CD4-positive, alpha-beta T cell (primary cell): ENCODE measurements at regions of chr1 and their contacts with region 1.

Region 1: DNA sequence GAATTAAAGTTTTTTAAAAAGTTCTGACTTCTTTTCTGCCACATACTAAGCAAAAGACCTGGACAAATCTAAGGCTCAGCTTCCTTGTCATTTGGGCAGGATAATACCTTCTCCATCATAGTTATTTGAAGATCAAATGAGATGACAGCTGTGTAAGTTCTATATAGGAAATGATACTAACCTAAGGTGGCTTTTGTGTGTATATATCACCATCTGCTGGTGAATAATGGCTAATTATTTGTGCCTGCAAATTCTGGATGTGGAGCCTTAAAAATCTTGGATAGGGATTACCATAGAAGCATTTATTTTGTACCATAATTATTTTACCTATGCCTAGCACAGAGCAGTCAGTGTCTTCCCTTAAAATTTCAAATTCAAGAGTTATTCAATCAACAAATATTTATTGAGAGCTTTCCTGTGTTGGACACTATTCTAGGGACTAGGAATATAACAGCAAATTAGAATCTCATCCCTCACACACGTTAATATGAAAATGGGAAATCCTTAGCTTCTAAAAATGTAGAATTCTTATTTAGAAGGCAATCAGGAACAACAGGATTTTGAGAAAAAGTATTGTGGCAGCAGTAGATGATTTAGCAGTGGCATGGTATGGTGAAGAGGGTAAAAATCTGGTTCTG is 89.8 kb downstream of the TMEM200B start:
- DNase-seq: peak in 3 of 14 experiments; percentile 56 to 62 (median 60)
- ATAC-seq: peak; percentile 57
- H3K4me3 ChIP-seq: no peak overlapping the region
- H3K4me3 Mint-ChIP-seq: no peak overlapping the region
- H3K27ac ChIP-seq: no peak overlapping the region
- H3K27ac Mint-ChIP-seq: no peak overlapping the region
- H3K4me1 ChIP-seq: no peaks in the 10 kb centered on the region
- H3K4me1 Mint-ChIP-seq: peaks cover 8% of the 10 kb centered on the region
- H3K27me3 ChIP-seq: no peaks in the 10 kb centered on the region
- H3K27me3 Mint-ChIP-seq: no peaks in the 10 kb centered on the region
- CTCF ChIP-seq: peak; percentile 78

Region 2: DNA sequence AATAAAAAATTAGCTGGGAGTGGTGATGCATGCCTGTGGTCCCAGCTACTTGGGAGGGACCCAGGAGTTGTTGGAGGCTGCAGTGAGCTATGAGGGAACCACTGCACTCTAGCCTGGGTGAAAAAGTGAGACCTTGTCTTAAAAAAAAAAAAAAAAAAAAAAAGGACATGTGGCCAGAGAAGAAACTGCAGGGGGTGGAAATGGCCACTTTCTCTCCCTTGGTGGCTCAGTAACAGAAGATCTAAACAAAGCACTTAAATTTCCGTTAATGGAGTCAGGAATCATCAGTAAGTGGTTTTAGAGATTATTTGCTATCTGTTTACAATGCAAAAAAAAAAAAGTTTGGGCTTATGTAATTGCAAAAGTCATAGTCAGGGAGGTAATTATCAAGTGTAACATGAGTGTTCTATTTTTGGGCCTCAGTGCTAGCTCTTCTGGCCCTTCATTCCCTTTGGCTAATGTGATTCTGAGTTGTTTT is 241.3 kb before region 1 on chr1:
- CTCF ChIA-PET with region 1: no interaction called
- POLR2A ChIA-PET with region 1: no interaction called
- intact Hi-C with region 1: loop called (anchors 5 kb)
- DNase-seq: no peak
- ATAC-seq: no peak
- H3K4me3 ChIP-seq: no peak overlapping the region
- H3K4me3 Mint-ChIP-seq: no peak overlapping the region
- H3K27ac ChIP-seq: no peak overlapping the region
- H3K27ac Mint-ChIP-seq: no peak overlapping the region
- H3K4me1 ChIP-seq: no peaks in the 10 kb centered on the region
- H3K4me1 Mint-ChIP-seq: peaks cover 7% of the 10 kb centered on the region
- H3K27me3 ChIP-seq: no peaks in the 10 kb centered on the region
- H3K27me3 Mint-ChIP-seq: peaks cover 11% of the 10 kb centered on the region
- CTCF ChIP-seq: no peak

Region 3: DNA sequence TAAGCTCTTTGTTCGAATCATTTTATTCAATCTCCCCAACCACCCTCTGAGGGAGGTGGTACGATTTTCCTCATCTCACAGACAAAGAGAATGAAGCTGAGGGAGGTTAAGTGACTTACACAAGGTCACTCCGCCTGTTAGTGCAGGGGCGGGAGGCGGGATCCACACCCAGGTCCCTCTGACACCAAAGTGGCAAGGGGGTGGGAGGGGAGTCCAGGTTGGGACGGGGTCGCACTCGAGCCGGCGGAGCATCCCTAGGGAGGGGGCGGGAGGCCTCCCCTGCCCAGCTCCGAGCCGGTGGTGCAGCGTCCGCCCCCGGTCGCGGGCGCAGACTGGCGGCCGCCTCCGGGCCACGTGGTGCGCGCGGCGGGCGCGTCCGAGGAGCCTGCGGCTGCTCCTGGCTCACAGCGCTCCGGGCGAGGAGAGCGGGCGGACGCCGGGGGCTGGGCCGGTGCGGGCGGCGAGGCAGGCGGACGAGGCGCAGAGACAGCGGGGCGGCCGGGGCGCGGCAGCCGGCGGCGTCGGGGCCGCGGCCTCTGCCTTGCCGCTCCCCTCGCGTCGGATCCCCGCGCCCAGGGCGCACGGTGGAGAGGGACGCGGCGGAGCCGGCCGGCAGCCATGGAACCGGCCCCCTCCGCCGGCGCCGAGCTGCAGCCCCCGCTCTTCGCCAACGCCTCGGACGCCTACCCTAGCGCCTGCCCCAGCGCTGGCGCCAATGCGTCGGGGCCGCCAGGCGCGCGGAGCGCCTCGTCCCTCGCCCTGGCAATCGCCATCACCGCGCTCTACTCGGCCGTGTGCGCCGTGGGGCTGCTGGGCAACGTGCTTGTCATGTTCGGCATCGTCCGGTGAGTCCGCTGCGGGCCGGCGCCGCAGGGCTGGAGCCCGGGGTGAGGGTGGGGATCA is 221.9 kb before region 1 on chr1 and contains the start of gene OPRD1:
- CTCF ChIA-PET with region 1: no interaction called
- POLR2A ChIA-PET with region 1: no interaction called
- intact Hi-C with region 1: no loop called
- DNase-seq: no peak
- ATAC-seq: no peak
- H3K4me3 ChIP-seq: no peak within 1 kb of the TSS
- H3K4me3 Mint-ChIP-seq: no peak within 1 kb of the TSS
- H3K27ac ChIP-seq: no peak within 1 kb of the TSS
- H3K27ac Mint-ChIP-seq: no peak within 1 kb of the TSS
- H3K4me1 ChIP-seq: peaks cover 3% of the 10 kb centered on the region
- H3K4me1 Mint-ChIP-seq: no peaks in the 10 kb centered on the region
- H3K27me3 ChIP-seq: peaks cover 27 to 58% of the 10 kb centered on the region in 2 experiments
- H3K27me3 Mint-ChIP-seq: peaks cover 59% of the 10 kb centered on the region
- CTCF ChIP-seq: no peak
- total RNA-seq, gene OPRD1: not detected

Region 4: DNA sequence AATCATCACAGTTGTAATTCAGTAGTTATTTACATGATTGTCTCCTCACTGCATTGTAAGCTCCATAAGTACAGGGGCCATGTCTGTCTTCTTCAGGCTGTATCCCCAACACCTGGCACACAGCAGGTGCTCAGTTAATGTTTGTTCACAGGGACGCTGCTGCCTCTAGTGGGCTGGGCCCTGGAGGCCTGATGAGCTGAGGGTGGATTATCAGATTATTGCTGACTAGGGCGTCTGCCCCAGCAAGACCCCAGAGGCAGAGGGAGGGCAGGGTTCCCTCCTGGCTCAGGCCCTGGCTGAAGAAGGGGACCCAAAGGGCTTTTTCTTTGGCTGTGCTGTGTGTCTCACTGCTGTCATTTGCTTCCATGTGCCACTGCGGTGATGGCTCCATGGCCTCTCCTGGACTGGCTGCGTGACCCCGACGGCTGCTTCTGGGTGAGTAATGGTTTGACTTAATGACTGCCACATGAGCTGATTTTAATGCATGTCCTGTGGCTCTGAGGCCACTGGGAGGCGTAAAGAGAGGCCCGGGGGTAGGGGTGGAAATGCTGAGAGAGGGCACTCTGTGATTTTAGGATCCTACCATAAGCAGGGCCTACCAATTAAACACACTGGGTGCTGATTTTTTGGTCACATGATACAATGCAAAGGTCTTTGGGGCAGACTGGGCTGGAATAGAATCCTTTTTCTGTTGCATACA is 140.4 kb before region 1 on chr1:
- CTCF ChIA-PET with region 1: interaction called, 10 read pairs
- POLR2A ChIA-PET with region 1: no interaction called
- intact Hi-C with region 1: no loop called
- DNase-seq: peak in 8 of 14 experiments; percentile 16 to 57 (median 28)
- ATAC-seq: peak; percentile 72
- H3K4me3 ChIP-seq: no peak overlapping the region
- H3K4me3 Mint-ChIP-seq: no peak overlapping the region
- H3K27ac ChIP-seq: no peak overlapping the region
- H3K27ac Mint-ChIP-seq: no peak overlapping the region
- H3K4me1 ChIP-seq: peaks cover 33% of the 10 kb centered on the region
- H3K4me1 Mint-ChIP-seq: peaks cover 39% of the 10 kb centered on the region
- H3K27me3 ChIP-seq: no peaks in the 10 kb centered on the region
- H3K27me3 Mint-ChIP-seq: no peaks in the 10 kb centered on the region
- CTCF ChIP-seq: peak; percentile 23

Region 5: DNA sequence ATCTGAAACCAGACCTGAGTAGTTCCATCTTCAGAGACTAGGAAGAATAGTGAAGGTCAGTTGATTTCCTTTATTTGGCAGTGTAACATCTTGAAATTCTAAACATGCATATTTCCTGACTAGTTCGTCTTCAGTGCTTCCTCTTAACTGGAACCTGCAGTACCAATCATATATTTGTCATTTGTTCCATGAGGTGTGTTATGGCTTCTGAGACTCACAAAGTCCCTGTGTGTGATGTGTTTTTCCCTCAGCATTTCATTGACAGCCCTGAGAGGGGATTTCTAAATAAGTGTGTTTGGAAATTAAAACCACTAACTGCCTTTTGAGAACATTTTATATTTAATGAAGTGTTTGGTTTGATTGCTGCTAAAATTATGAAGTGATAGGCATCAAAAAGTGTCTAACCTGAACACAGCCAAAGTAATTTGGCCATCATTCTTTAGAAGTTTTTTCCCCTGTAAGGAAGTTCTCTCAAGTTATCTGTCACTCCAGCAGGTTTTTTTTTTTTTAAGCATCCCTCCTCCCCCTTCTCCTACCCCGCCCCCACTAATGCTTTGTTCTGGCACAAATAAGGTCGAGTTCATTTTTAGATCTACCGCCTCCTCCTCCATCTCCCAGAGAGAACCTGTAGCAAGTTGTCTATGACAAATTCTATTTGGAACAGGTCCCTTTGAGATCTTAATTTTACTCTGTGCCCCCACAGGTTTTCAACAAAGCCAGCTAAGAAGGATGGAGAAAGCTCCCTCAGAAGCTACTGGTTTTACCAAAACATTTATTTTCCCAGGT is 28.4 kb after region 1 on chr1:
- CTCF ChIA-PET with region 1: no interaction called
- POLR2A ChIA-PET with region 1: no interaction called
- intact Hi-C with region 1: no loop called
- DNase-seq: no peak
- ATAC-seq: no peak
- H3K4me3 ChIP-seq: no peak overlapping the region
- H3K4me3 Mint-ChIP-seq: no peak overlapping the region
- H3K27ac ChIP-seq: no peak overlapping the region
- H3K27ac Mint-ChIP-seq: peak overlapping the region; percentile 29
- H3K4me1 ChIP-seq: no peaks in the 10 kb centered on the region
- H3K4me1 Mint-ChIP-seq: peaks cover 18% of the 10 kb centered on the region
- H3K27me3 ChIP-seq: no peaks in the 10 kb centered on the region
- H3K27me3 Mint-ChIP-seq: no peaks in the 10 kb centered on the region
- CTCF ChIP-seq: no peak